Aorta (tissue), 5 donors: ENCODE measurements at regions of chr3 and their contacts with region 1.

Region 1: GRCh38 chr3:192022412-192022811 is 561.4 kb downstream of the PYDC2 start:
- DNase-seq: no peak
- ATAC-seq: no peak
- H3K4me3 ChIP-seq: no peak overlapping the region
- H3K27ac ChIP-seq: no peak overlapping the region
- H3K4me1 ChIP-seq: no peaks in the 10 kb centered on the region
- H3K27me3 ChIP-seq: no peaks in the 10 kb centered on the region

Region 2: GRCh38 chr3:191944835-191945234 is 77.6 kb before region 1 on chr3:
- intact Hi-C with region 1: no loop called
- DNase-seq: no peak
- ATAC-seq: no peak
- H3K4me3 ChIP-seq: no peak overlapping the region
- H3K27ac ChIP-seq: no peak overlapping the region
- H3K4me1 ChIP-seq: no peaks in the 10 kb centered on the region
- H3K27me3 ChIP-seq: no peaks in the 10 kb centered on the region

Region 3: GRCh38 chr3:191958980-191959671 is 63.3 kb before region 1 on chr3:
- intact Hi-C with region 1: no loop called
- DNase-seq: no peak
- ATAC-seq: no peak
- H3K4me3 ChIP-seq: no peak overlapping the region
- H3K27ac ChIP-seq: no peak overlapping the region
- H3K4me1 ChIP-seq: no peaks in the 10 kb centered on the region
- H3K27me3 ChIP-seq: no peaks in the 10 kb centered on the region

Region 4: GRCh38 chr3:192063570-192063969 is 41.2 kb after region 1 on chr3:
- intact Hi-C with region 1: no loop called
- DNase-seq: no peak
- ATAC-seq: peak; percentile 60
- H3K4me3 ChIP-seq: no peak overlapping the region
- H3K27ac ChIP-seq: no peak overlapping the region
- H3K4me1 ChIP-seq: no peaks in the 10 kb centered on the region
- H3K27me3 ChIP-seq: no peaks in the 10 kb centered on the region

Region 5: GRCh38 chr3:192082730-192083660 is 60.6 kb after region 1 on chr3:
- intact Hi-C with region 1: no loop called
- DNase-seq: no peak
- ATAC-seq: no peak
- H3K4me3 ChIP-seq: no peak overlapping the region
- H3K27ac ChIP-seq: no peak overlapping the region
- H3K4me1 ChIP-seq: no peaks in the 10 kb centered on the region
- H3K27me3 ChIP-seq: no peaks in the 10 kb centered on the region

Region 6: GRCh38 chr3:192216067-192216466 is 193.7 kb after region 1 on chr3:
- intact Hi-C with region 1: loop called in 1 of 2 experiments (anchors 5 kb)
- DNase-seq: no peak
- ATAC-seq: no peak
- H3K4me3 ChIP-seq: no peak overlapping the region
- H3K27ac ChIP-seq: no peak overlapping the region
- H3K4me1 ChIP-seq: no peaks in the 10 kb centered on the region
- H3K27me3 ChIP-seq: no peaks in the 10 kb centered on the region